Activated CD8-positive, alpha-beta T cell treated with anti-CD3 and anti-CD28 coated beads for 36 hours (primary cell): ENCODE measurements at regions of chr6 and their contacts with region 1.

Region 1: DNA sequence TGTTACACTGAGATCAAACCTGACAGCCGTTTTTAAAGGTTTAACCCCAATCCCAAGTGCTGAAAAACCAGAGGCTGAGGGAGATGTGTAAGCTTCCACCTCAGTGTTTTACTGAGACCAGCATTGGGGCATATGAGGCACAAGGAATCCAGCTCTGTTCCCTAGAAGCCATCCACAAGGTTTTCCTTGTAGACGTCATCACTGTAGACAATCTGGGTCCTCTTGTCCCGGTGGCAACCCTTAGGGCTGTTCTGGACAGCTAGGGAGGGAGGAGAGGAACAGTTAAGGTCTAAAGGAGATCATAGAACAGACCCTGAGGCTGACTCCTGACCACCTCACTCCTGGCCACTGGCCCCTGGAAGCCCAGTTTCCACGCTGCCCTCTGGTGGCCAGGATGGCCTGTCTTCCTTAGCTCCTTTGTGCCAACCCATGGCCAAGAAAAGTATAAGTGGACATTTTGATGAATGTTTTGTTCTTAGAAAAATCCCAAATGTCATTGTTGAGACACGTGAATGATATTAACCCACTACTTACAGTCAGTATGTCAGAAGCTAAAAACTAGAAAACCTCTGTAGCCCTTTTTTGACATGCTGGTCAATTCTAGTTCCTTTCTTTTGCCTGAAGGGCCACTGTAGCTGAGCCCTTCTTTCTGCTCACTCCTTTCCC is 6.4 kb downstream of the CFB start:
- DNase-seq: peak; percentile 60
- ATAC-seq: peak; percentile 61
- H3K4me3 Mint-ChIP-seq: no peak overlapping the region
- H3K27ac Mint-ChIP-seq: no peak overlapping the region
- H3K4me1 Mint-ChIP-seq: peaks cover 3% of the 10 kb centered on the region
- H3K27me3 Mint-ChIP-seq: no peaks in the 10 kb centered on the region
- CTCF ChIP-seq: peak; percentile 68

Region 2: GRCh38 chr6:31888276-31889258 is 63.7 kb before region 1 on chr6:
- CTCF ChIA-PET with region 1: interaction called, 11 read pairs
- POLR2A ChIA-PET with region 1: interaction called, 3 read pairs
- intact Hi-C with region 1: no loop called
- DNase-seq: peak; percentile 71
- ATAC-seq: peak; percentile 64
- H3K4me3 Mint-ChIP-seq: no peak overlapping the region
- H3K27ac Mint-ChIP-seq: no peak overlapping the region
- H3K4me1 Mint-ChIP-seq: peaks cover 5% of the 10 kb centered on the region
- H3K27me3 Mint-ChIP-seq: no peaks in the 10 kb centered on the region
- CTCF ChIP-seq: peak; percentile 93

Region 3: GRCh38 chr6:31901953-31902643 is 50.2 kb before region 1 on chr6 and contains the start of gene ZBTB12:
- CTCF ChIA-PET with region 1: interaction called, 13 read pairs
- POLR2A ChIA-PET with region 1: interaction called, 9 read pairs
- intact Hi-C with region 1: no loop called
- DNase-seq: peak; percentile 88
- ATAC-seq: peak; percentile 70
- H3K4me3 Mint-ChIP-seq: peak within 1 kb of the TSS; percentile 80
- H3K27ac Mint-ChIP-seq: peak within 1 kb of the TSS; percentile 83
- H3K4me1 Mint-ChIP-seq: peaks cover 26% of the 10 kb centered on the region
- H3K27me3 Mint-ChIP-seq: peaks cover 3% of the 10 kb centered on the region
- CTCF ChIP-seq: no peak
- total RNA-seq, gene ZBTB12: 1.8 to 2.1 TPM

Region 4: GRCh38 chr6:31922942-31923341 is 29.3 kb before region 1 on chr6:
- CTCF ChIA-PET with region 1: interaction called, 13 read pairs
- POLR2A ChIA-PET with region 1: interaction called, 3 read pairs
- intact Hi-C with region 1: no loop called
- DNase-seq: peak; percentile 65
- ATAC-seq: peak; percentile 58
- H3K4me3 Mint-ChIP-seq: no peak overlapping the region
- H3K27ac Mint-ChIP-seq: no peak overlapping the region
- H3K4me1 Mint-ChIP-seq: no peaks in the 10 kb centered on the region
- H3K27me3 Mint-ChIP-seq: no peaks in the 10 kb centered on the region
- CTCF ChIP-seq: peak; percentile 8

Region 5: GRCh38 chr6:31940256-31940664 is 12.0 kb before region 1 on chr6:
- CTCF ChIA-PET with region 1: interaction called, 21 read pairs
- POLR2A ChIA-PET with region 1: interaction called, 7 read pairs
- intact Hi-C with region 1: no loop called
- DNase-seq: no peak
- ATAC-seq: no peak
- H3K4me3 Mint-ChIP-seq: no peak overlapping the region
- H3K27ac Mint-ChIP-seq: no peak overlapping the region
- H3K4me1 Mint-ChIP-seq: no peaks in the 10 kb centered on the region
- H3K27me3 Mint-ChIP-seq: peaks cover 8% of the 10 kb centered on the region
- CTCF ChIP-seq: no peak

Region 6: GRCh38 chr6:31971993-31972708 is 19.9 kb after region 1 on chr6 and contains the start of gene DXO:
- CTCF ChIA-PET with region 1: interaction called, 16 read pairs
- POLR2A ChIA-PET with region 1: interaction called, 85 read pairs
- intact Hi-C with region 1: no loop called
- DNase-seq: peak; percentile 99
- ATAC-seq: peak; percentile 95
- H3K4me3 Mint-ChIP-seq: peak within 1 kb of the TSS; percentile 94
- H3K27ac Mint-ChIP-seq: peak within 1 kb of the TSS; percentile 99
- H3K4me1 Mint-ChIP-seq: peaks cover 33% of the 10 kb centered on the region
- H3K27me3 Mint-ChIP-seq: peaks cover 2% of the 10 kb centered on the region
- CTCF ChIP-seq: no peak
- total RNA-seq, gene DXO: 13.0 to 13.1 TPM